ENCODE measurements at regions of chr2 and their contacts with region 1.

Region 1: GRCh38 chr2:75077909-75078308 is 119.5 kb downstream of the POLE4 start:
- DNase-seq: no peak
- H3K27ac ChIP-seq: no peak overlapping the region
- CTCF ChIP-seq: no peak

Region 2: DNA sequence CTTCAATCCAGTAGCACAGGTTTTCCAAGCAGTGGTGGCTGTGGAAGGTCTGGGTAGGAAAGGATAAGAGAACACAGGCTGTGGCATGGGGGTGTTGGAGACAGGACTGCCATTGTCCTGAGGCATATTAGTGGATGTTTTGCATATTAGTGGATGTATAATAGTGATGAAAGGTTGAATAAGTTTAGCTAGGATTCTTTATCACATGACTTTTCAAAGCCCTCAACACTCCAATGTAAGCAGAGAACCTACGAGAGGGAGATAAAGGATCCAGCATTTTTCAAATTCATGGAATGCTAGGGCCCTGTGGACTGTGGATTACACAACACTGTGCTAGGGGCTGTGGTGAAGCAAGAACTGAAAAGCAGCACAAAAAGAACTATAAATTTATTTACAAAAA is 56.3 kb before region 1 on chr2:
- CTCF ChIA-PET with region 1: no interaction called
- POLR2A ChIA-PET with region 1: no interaction called
- DNase-seq: no peak
- H3K27ac ChIP-seq: no peak overlapping the region
- CTCF ChIP-seq: no peak

Region 3: DNA sequence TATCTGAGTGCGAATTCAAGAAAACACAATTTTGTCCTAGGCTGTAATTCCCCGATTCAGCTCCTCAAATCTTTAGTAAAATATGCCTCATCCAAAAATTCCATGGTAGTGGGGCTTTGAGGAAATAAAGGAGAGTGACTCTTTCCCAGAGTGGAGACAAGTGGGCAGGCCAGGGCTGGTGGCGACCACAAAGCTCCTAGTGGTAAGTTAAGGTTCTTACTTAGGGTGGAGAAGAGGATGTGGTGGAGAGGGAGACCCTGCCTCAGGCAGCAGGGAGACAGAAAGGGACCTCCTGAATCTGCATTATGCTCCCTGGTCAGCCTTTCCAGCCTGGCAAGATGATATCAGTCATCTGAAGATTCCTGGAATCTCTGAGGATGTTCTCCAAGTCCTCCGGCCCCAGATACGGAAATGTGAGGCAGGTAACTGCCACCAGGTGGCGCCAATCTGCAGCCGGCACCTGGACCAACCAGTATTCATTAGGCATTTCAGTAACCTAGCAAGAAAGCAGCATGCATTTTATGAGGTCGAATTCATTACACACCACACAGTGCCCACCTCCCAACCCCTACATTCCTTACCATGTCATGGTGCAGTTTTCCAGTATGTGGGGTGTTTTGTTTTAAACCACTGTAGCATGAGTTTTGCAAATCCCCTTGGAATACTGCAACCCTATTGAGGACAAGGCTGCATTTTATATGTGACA is 13.1 kb before region 1 on chr2:
- CTCF ChIA-PET with region 1: interaction called, 10 read pairs
- POLR2A ChIA-PET with region 1: no interaction called
- DNase-seq: peak; percentile 59
- H3K27ac ChIP-seq: no peak overlapping the region
- CTCF ChIP-seq: peak; percentile 83

Measured in RWPE1 (cell line).